ENCODE measurements at regions of chr17 and their contacts with region 1.

Region 1: DNA sequence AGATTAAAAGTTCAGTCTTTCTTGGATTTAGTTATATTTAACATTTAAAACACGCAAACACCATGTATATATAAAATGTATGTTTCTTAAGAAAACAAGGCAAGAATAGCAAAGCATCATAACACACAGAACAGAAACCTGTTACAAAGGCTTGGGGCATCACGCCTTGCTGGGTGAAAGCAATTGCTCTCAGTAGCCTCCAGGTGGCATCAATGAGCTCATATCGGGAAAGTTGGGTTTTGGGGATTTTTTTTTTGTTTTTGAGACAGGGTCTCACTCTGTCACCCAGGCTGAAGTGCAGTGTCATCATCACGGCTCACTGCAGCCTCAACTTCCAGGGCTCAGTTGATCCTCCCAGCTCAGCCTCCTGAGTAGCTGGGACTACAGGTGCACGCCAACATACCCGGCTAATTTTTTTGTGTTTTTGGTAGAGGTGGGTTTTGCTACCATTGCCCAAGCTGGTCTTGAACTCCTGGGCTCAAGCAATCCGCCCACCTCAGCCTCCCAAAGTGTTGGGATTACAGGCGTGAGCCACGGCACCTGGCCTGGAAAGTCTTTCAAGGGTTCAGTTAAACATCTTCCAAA is 56.9 kb downstream of the CYB5D2 start:
- DNase-seq: no peak
- H3K4me3 Mint-ChIP-seq: no peak overlapping the region
- H3K27ac Mint-ChIP-seq: no peak overlapping the region
- H3K4me1 Mint-ChIP-seq: peaks cover 7% of the 10 kb centered on the region
- H3K27me3 Mint-ChIP-seq: no peaks in the 10 kb centered on the region

Region 2: DNA sequence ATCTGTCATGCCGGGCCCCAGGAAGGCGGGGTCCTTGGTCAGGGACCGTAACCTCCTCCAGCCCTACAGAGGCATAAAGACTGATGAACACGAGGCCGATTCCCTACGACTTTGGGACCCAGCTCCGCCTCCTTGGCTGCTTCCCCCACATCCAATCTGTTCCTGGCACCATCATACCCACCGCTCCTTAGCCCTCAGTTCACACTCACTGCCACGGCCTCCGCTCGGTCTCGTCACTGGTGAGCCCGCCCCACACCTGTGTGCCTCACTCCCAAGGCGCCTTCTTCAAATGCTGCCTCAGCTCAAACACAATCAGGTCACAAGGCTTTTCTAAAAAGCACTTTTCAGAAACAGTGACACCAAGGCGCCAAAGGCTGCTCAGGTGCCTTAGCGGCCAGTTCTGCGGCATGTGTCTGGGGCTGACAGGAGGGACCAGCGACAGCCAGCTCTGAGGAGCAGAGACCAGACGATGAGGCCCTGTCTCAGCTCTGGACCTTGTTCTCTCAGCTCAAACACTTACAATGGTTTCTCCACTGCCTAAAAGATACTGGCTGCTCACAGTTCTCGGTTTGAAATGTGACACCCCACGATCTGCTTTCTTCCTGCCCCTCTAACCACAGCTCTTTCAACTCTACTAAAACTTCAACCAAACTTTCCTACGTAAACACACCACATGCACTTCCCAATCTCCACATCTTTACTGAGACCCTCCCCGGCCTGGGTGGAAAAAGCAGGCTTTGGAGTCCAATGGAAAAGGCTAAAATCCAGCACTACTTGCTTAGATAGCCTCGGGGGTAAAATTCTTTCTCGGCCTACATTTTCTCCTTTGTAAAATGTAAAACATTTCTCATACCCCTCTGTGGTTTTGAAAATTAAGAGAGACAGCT is 23.7 kb before region 1 on chr17:
- intact Hi-C with region 1: loop called (anchors 2 kb)
- DNase-seq: peak; percentile 46
- H3K4me3 Mint-ChIP-seq: peak overlapping the region; percentile 73
- H3K27ac Mint-ChIP-seq: peak overlapping the region; percentile 87
- H3K4me1 Mint-ChIP-seq: peaks cover 39% of the 10 kb centered on the region
- H3K27me3 Mint-ChIP-seq: no peaks in the 10 kb centered on the region

Region 3: DNA sequence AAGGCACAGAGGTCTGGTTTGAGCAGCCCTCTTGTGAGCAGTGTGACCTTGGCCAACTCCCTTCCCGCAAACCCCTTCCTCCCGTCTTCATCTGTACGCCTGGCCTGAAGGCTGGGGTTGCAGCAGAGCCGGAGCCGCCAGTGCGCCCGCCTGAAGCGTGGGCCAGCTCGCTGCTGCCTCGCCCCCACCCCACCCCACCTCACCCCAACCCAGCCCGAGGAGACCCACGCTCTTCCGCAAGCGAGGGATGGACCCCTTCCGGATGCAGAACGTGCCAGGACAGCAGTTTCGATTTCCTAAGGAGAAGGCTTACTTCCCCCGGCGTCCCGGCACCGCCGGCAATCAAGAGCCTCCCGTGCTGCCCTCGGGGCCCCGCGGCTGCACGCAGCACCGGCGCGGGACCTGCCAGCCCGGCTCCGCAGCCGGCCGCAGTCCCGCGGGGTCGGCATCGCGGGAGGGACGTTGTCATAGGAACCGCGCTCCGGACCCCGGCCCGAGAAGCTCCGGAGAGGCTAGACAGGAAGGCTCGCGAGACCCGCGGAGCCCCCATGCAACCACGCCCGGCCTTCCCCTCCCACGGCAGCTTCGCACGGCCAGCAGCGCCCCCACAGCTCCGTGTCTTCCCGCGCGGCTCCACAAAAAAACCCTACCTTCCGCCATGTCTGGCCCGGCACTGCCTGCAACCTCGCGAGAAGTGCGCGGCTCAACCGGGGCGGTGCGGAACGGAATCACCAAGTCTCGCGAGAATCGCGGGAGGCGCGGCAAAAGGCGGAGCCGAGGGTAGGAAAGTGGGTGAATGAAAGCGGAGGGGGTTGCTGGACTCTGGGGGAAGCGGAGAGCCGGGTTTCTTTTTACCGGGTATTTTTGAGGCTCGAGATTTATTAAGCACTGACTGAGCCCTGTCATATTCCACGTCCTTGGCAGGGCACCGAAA is 63.6 kb after region 1 on chr17 and contains the start of gene ANKFY1:
- intact Hi-C with region 1: no loop called
- DNase-seq: peak; percentile 98
- H3K4me3 Mint-ChIP-seq: peak within 1 kb of the TSS; percentile 87
- H3K27ac Mint-ChIP-seq: peak within 1 kb of the TSS; percentile 81
- H3K4me1 Mint-ChIP-seq: peaks cover 23% of the 10 kb centered on the region
- H3K27me3 Mint-ChIP-seq: no peaks in the 10 kb centered on the region
- total RNA-seq, gene ANKFY1: 50.6 and 51.9 TPM in 2 replicates

Region 4: GRCh38 chr17:4412933-4413831 is 213.3 kb after region 1 on chr17:
- intact Hi-C with region 1: loop called (anchors 1 kb)
- DNase-seq: peak; percentile 83
- H3K4me3 Mint-ChIP-seq: peak overlapping the region; percentile 57
- H3K27ac Mint-ChIP-seq: peak overlapping the region; percentile 76
- H3K4me1 Mint-ChIP-seq: peaks cover 5% of the 10 kb centered on the region
- H3K27me3 Mint-ChIP-seq: no peaks in the 10 kb centered on the region

Region 5: GRCh38 chr17:4607773-4608187 is 407.9 kb after region 1 on chr17:
- intact Hi-C with region 1: no loop called
- DNase-seq: no peak
- H3K4me3 Mint-ChIP-seq: no peak overlapping the region
- H3K27ac Mint-ChIP-seq: no peak overlapping the region
- H3K4me1 Mint-ChIP-seq: no peaks in the 10 kb centered on the region
- H3K27me3 Mint-ChIP-seq: peaks cover 28% of the 10 kb centered on the region

Region 6: DNA sequence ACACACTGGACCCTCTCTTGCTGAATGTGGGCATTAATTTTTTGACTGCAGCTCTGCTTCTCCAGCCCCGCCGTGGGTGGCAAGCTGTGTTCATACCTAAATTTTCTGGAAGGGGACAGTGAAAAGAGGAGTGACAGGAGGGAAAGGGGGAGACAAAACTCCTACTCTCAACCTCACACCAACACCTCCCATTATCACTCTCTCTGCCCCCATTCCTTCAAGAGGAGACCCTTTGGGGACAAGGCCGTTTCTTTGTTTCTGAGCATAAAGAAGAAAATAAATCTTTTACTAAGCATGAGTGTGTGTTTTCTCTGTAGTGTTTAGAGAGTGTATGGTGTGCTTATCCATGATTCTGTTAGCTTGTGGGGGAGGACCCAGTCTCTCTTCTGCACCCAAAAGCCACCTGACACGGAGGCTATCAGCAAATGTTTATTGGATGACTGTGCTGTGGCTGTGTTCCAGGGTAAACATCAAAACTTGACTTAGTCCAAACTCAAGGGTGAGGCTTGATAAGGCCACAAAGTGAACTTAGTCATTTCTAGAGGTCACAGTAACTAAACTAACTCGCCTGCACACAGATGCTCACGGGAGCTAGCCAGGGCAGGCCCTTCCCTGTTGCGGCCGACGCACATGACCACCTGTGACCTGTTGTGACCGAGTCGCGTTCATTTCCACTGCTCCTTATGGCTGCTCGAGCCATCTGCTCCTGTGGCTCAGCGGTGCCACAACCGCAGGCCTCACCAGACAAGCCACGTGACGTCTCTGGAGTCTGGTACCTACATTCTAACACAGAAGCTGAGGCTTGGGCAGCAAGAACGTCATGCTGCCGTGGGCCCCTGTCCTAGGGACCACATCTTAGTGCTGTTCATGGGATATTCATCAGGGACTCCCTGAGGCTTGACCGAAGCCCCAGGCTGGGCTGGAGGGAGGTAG is 521.6 kb after region 1 on chr17:
- intact Hi-C with region 1: no loop called
- DNase-seq: no peak
- H3K4me3 Mint-ChIP-seq: no peak overlapping the region
- H3K27ac Mint-ChIP-seq: peak overlapping the region; percentile 58
- H3K4me1 Mint-ChIP-seq: peaks cover 14% of the 10 kb centered on the region
- H3K27me3 Mint-ChIP-seq: no peaks in the 10 kb centered on the region

Measured in activated T-helper 2 cell treated with anti-CD3 and anti-CD28 coated beads, Interferon-gamma antibody, Interleukin-2, Interleukin-4, amounts not matched to agents 10 μg/mL and 5 μg/mL and 100 μg/mL, durations not matched to agents 14 hours and 24 hours and 36 hours (primary cell).